ENCODE measurements at regions of chr5 and their contacts with region 1.

Region 1: DNA sequence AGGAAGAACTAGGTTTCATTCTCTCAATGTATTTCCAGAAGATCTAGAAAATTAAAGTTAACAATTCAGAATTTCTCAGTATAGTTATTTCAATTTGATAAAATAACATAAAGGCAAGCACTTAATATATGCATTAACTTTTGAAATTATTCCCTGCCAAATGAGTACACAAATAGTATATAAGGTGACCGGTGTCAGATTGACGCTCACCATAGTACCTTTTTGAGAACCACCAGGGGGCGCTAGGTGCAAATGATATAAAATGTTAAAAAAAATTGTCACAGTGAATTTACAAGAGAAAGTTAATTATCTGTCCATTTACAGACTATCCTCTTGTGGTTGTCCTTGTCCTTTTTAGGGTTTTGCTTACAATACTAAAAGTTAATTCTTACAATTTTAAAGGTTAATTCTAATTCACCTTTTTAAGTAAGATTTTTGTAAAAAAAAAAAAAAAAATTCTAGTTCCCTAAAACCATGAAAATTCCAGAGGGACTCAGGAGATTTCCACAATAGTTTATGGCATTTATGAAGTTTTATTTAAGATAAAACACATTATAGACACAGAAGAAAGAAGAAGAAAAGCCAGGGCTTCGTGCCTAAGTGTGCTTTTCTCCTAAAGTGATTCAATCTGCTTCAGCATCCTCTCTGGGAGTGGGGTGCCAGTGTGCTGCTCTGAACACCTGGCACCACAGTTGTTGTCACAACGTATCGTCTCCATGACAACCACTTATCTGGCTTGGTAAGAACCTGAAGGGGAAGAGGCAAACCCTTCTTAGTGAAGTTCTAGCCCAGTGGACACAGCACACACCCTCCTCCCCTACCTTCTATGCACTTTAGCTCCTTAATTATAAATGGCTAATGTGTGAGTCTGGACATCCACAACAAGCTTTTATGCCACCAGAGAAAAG is 1.7 kb downstream of the ADAMTS16 start:
- DNase-seq: peak; percentile 32
- H3K4me3 ChIP-seq: no peak overlapping the region
- H3K27ac ChIP-seq: no peak overlapping the region
- H3K4me1 ChIP-seq: peaks cover 0 to 15% (median 5%) of the 10 kb centered on the region in 4 donors
- H3K27me3 ChIP-seq: peaks cover 27% of the 10 kb centered on the region
- CTCF ChIP-seq: peak; percentile 54 to 84 (median 74)
- EP300 ChIP-seq: no peak
- POLR2A ChIP-seq: no peak

Region 2: GRCh38 chr5:4879693-4880303 is 262.1 kb before region 1 on chr5:
- in situ Hi-C with region 1: loop called in 1 of 4 experiments (anchors 25 kb)
- intact Hi-C with region 1: no loop called
- DNase-seq: peak; percentile 70
- H3K4me3 ChIP-seq: no peak overlapping the region
- H3K27ac ChIP-seq: no peak overlapping the region
- H3K4me1 ChIP-seq: no peaks in the 10 kb centered on the region
- H3K27me3 ChIP-seq: no peaks in the 10 kb centered on the region
- CTCF ChIP-seq: peak; percentile 84 to 91 (median 87)
- EP300 ChIP-seq: no peak
- POLR2A ChIP-seq: no peak

Region 3: GRCh38 chr5:5116956-5117355 is 24.9 kb before region 1 on chr5:
- in situ Hi-C with region 1: no loop called
- intact Hi-C with region 1: no loop called
- DNase-seq: no peak
- H3K4me3 ChIP-seq: no peak overlapping the region
- H3K27ac ChIP-seq: no peak overlapping the region
- H3K4me1 ChIP-seq: no peaks in the 10 kb centered on the region
- H3K27me3 ChIP-seq: no peaks in the 10 kb centered on the region
- CTCF ChIP-seq: no peak
- EP300 ChIP-seq: no peak
- POLR2A ChIP-seq: no peak

Region 4: DNA sequence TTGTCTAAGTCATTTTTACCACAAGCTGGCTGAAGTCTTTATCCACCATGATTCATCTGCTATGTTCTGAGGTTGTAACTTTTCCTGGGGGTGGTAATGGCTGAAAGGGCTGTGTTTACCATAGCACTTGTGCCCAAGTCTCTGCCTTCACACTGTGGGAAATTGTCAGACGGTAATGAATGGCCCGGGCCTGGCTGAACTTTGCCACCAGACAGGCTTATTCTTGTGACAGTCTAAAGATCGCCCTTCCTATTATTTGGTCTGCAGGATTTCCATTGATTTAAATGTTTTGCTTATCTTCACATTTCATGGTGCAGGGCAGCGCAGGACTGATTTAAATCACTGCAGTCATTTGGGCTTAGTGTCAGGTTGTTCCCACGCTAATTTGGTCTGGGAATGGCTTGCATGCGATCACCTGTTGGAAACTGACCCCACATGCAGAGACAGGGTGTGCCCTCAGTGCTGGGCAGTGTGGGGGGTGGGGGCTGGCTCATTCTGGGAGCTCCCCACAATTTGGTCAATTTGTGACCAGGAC is 171.3 kb after region 1 on chr5:
- in situ Hi-C with region 1: no loop called
- intact Hi-C with region 1: no loop called
- DNase-seq: no peak
- H3K4me3 ChIP-seq: no peak overlapping the region
- H3K27ac ChIP-seq: no peak overlapping the region
- H3K4me1 ChIP-seq: no peaks in the 10 kb centered on the region
- H3K27me3 ChIP-seq: no peaks in the 10 kb centered on the region
- CTCF ChIP-seq: no peak
- EP300 ChIP-seq: no peak
- POLR2A ChIP-seq: no peak

Region 5: GRCh38 chr5:5409151-5409810 is 267.4 kb after region 1 on chr5:
- in situ Hi-C with region 1: loop called (anchors 10 to 25 kb)
- intact Hi-C with region 1: no loop called
- DNase-seq: no peak
- H3K4me3 ChIP-seq: no peak overlapping the region
- H3K27ac ChIP-seq: no peak overlapping the region
- H3K4me1 ChIP-seq: no peaks in the 10 kb centered on the region
- H3K27me3 ChIP-seq: no peaks in the 10 kb centered on the region
- CTCF ChIP-seq: no peak
- EP300 ChIP-seq: no peak
- POLR2A ChIP-seq: no peak

Region 6: GRCh38 chr5:5421961-5422818 is 280.3 kb after region 1 on chr5 and contains the start of gene ICE1:
- in situ Hi-C with region 1: loop called in 3 of 4 experiments (anchors 10 to 25 kb)
- intact Hi-C with region 1: loop called (anchors 5 kb)
- DNase-seq: peak; percentile 97
- H3K4me3 ChIP-seq: peak within 1 kb of the TSS; percentile 76 to 99 (median 94)
- H3K27ac ChIP-seq: peak within 1 kb of the TSS; percentile 91 to 97 (median 94)
- H3K4me1 ChIP-seq: peaks cover 18 to 37% (median 28%) of the 10 kb centered on the region in 4 donors
- H3K27me3 ChIP-seq: no peaks in the 10 kb centered on the region
- CTCF ChIP-seq: peak in 1 of 5 experiments; percentile 7
- EP300 ChIP-seq: peak; percentile 58
- POLR2A ChIP-seq: peak; percentile 62
- total RNA-seq, gene ICE1: 19.8 to 51.9 (median 25.9) TPM

Measured in transverse colon (tissue), 4 donors.